Activated T-helper 1 cell treated with anti-CD3 and anti-CD28 coated beads, Interleukin-12 subunit alpha, Interleukin-12 subunit beta, Interleukin-2, Interleukin-4 antibody, amounts not matched to agents 30 ng/mL and 10 ng/mL and 1 ng/mL, durations not matched to agents 14 hours and 24 hours and 36 hours (primary cell): ENCODE measurements at regions of chr3 and their contacts with region 1.

Region 1: GRCh38 chr3:102536456-102536855 is 101.6 kb downstream of the ZPLD1 start:
- DNase-seq: no peak
- H3K4me3 Mint-ChIP-seq: no peak overlapping the region
- H3K27ac Mint-ChIP-seq: no peak overlapping the region
- H3K4me1 Mint-ChIP-seq: no peaks in the 10 kb centered on the region
- H3K27me3 Mint-ChIP-seq: peaks cover 9% of the 10 kb centered on the region

Region 2: DNA sequence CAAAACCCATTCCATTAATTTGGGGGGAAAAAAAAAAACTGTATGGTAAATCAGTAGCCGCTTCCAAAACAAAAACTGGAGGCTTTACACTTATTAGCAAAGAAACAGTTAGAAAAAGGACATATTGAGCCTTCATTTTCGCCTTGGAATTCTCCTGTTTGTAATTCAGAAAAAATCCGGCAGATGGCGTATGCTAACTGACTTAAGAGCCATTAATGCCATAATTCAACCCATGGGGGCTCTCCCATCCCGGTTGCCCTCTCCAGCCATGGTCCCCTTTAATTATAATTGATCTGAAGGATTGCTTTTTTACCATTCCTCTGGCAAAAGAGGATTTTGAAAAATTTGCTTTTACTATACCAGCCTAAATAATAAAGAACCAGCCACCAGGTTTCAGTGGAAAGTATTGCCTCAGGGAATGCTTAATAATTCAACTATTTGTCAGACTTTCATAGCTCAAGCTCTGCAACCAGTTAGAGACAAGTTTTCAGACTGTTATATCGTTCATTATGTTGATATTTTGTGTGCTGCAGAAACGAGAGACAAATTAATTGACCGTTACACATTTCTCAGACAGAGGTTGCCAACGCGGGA is 840.6 kb before region 1 on chr3:
- intact Hi-C with region 1: loop called (anchors 5 kb)
- DNase-seq: no peak
- H3K4me3 Mint-ChIP-seq: no peak overlapping the region
- H3K27ac Mint-ChIP-seq: no peak overlapping the region
- H3K4me1 Mint-ChIP-seq: no peaks in the 10 kb centered on the region
- H3K27me3 Mint-ChIP-seq: no peaks in the 10 kb centered on the region

Region 3: GRCh38 chr3:101809178-101810021 is 727.1 kb before region 1 on chr3:
- intact Hi-C with region 1: loop called (anchors 1 kb)
- DNase-seq: no peak
- H3K4me3 Mint-ChIP-seq: no peak overlapping the region
- H3K27ac Mint-ChIP-seq: peak overlapping the region; percentile 27
- H3K4me1 Mint-ChIP-seq: peaks cover 55% of the 10 kb centered on the region
- H3K27me3 Mint-ChIP-seq: no peaks in the 10 kb centered on the region

Region 4: DNA sequence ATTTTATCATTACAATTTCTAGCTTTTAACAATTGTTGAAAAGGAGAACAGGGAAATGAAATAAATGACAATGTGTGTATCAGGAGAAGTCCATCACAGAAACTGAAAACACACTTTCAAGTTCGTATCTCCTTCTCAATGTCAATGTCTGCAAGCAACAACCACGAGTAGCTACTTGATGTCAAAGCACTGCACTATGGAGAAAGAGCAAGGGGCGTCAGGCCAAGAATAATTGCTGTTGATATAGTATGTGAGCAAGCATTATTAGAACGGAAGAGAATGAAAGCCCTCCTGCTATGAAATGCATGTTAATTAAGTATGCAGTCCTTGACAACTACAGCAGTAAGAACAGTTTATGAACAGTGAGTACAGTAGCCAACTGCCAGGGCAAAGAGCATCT is 1148.4 kb after region 1 on chr3:
- intact Hi-C with region 1: no loop called
- DNase-seq: no peak
- H3K4me3 Mint-ChIP-seq: no peak overlapping the region
- H3K27ac Mint-ChIP-seq: no peak overlapping the region
- H3K4me1 Mint-ChIP-seq: no peaks in the 10 kb centered on the region
- H3K27me3 Mint-ChIP-seq: no peaks in the 10 kb centered on the region